Mammary epithelial cell (primary cell): ENCODE measurements at regions of chr3 and their contacts with region 1.

Region 1: DNA sequence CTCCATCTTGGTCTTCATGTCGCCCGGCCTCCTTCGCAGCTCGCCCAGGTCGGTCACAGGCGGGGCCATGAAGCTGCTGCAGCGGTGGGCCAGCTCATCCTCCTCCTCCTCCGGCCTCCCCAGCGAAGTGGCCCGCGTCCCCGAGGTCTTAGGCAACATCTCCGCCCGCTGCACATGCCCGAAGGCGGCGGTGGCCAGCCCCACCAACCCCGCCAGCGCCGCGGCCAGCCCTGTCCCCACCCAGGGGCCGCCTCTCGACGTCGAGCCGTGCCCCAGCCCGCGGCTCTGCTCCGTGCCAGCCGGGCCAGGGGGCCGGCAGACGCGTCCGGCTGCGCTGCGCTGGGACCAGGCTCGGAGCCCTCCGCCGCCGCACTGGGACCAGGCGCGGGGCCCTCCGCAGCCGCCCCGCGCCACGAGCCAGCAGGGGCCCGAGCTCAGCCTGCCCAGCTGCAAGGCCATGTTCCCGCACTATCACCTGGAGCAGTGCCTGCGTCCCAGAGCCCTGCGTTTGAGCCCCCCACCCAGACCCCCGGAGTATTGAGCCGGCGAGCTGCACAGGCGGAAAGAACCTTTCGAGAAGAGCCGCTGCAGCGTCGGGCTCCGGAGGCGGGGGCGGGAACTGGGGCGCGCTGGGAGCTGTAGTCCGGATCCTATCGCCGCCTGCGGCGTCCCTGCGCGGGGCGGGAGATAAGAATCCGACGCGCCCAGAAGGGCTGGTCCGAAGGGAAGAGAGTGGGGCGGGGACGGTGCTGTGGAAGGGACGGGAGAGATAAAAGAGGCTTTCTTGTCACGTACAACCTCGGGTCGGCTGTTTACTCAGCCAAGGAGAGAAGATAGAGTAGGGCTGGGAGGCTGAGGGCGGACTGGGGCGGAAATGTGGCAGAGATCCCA is at the start of gene CPOX:
- DNase-seq: peak; percentile 93
- H3K4me3 ChIP-seq: peak within 1 kb of the TSS; percentile 62 to 94 (median 92)
- H3K27ac ChIP-seq: peak within 1 kb of the TSS; percentile 58
- H3K4me1 ChIP-seq: peaks cover 7% of the 10 kb centered on the region
- H3K27me3 ChIP-seq: no peaks in the 10 kb centered on the region
- CTCF ChIP-seq: no peak
- total RNA-seq, gene CPOX: 24.3 to 25.2 TPM

Region 2: GRCh38 chr3:98039322-98040024 is 553.8 kb before region 1 on chr3:
- CTCF ChIA-PET with region 1: no interaction called
- dilution Hi-C with region 1: no loop called
- in situ Hi-C with region 1: loop called in 1 of 2 experiments (anchors 25 kb)
- intact Hi-C with region 1: loop called (anchors 5 kb)
- DNase-seq: peak; percentile 80
- H3K4me3 ChIP-seq: peak overlapping the region; percentile 47 to 52 (median 50)
- H3K27ac ChIP-seq: no peak overlapping the region
- H3K4me1 ChIP-seq: peaks cover 6% of the 10 kb centered on the region
- H3K27me3 ChIP-seq: no peaks in the 10 kb centered on the region
- CTCF ChIP-seq: peak; percentile 74 to 82

Region 3: DNA sequence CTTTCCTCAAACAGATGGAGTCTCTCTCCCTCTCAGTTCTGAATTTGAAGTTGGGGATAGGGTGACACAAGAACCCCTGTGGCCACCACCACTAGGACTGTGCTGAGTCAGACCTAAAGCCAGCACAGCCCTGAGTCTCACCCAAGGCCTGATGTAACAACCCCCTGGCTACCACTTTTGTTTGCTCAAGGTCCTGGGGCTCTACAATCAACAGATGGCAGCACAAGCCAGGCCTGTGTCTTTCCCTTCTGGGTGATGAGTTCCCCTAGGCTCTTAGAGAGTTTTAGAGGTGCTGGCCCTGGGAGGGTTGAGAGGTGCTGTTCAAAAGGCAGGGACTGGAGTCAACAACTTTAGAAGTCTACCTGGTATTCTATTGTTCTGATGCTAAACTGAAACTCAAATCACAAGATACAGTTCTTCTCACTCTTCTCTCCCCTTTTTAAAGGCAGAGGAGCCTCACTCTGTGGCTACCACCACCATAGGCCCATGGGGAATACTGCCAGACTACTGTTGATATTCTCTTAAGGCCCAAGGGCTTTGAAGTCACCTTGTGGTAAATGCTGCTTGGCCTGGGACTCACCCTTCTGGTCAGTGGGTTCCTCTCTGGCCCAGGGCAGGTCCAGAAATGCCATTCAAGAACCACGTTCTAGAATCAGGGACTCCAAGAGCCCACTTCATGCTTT is 233.2 kb before region 1 on chr3:
- CTCF ChIA-PET with region 1: no interaction called
- dilution Hi-C with region 1: no loop called
- in situ Hi-C with region 1: no loop called
- intact Hi-C with region 1: loop called (anchors 5 kb)
- DNase-seq: peak; percentile 65
- H3K4me3 ChIP-seq: no peak overlapping the region
- H3K27ac ChIP-seq: no peak overlapping the region
- H3K4me1 ChIP-seq: peaks cover 4% of the 10 kb centered on the region
- H3K27me3 ChIP-seq: no peaks in the 10 kb centered on the region
- CTCF ChIP-seq: peak; percentile 22 to 43

Region 4: DNA sequence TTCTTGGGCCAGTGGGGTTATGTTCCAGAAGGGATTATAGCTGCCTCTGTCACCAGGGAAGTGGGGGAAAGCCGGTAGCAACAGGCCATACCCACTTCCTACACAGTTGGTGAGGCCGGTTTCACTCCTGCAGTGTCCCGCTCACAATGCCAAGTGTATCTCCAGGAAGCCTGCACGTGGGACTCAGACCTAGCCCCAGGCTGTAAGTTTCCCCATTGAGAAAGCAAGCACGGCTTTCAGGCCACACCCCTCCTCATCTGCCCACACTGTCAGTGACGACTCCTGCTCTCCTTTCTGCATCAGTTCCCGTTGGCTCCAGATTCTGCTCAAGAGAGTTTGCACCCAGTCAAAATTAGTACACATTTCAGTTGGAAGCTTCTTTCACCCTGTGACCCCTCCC is 51.7 kb after region 1 on chr3:
- CTCF ChIA-PET with region 1: no interaction called
- dilution Hi-C with region 1: no loop called
- in situ Hi-C with region 1: no loop called
- intact Hi-C with region 1: no loop called
- DNase-seq: peak; percentile 67
- H3K4me3 ChIP-seq: no peak overlapping the region
- H3K27ac ChIP-seq: no peak overlapping the region
- H3K4me1 ChIP-seq: no peaks in the 10 kb centered on the region
- H3K27me3 ChIP-seq: peaks cover 3% of the 10 kb centered on the region
- CTCF ChIP-seq: no peak

Region 5: DNA sequence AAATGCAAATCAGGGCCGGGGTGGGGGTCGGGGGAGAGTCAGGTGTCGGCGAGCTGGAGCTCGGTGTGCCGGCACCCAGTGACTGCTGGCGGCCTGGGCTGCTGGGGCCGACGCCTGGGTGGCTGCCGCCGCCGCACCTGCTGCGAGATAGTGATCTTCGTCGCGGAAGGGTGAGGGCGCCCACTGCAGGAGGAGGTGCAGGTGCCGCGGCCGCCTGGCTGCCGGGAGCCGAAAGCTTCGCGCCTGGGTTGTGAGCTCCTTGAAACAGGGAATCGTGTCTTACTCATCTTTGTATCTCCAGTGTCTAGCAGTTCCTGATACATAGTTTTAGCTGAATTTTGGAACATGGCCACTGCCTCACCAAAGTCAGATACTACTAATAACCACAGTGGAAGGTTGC is 64.2 kb after region 1 on chr3:
- CTCF ChIA-PET with region 1: interaction called, 15 read pairs
- dilution Hi-C with region 1: no loop called
- in situ Hi-C with region 1: no loop called
- intact Hi-C with region 1: no loop called
- DNase-seq: peak; percentile 24
- H3K4me3 ChIP-seq: peak overlapping the region in 1 of 3 experiments; percentile 4
- H3K27ac ChIP-seq: no peak overlapping the region
- H3K4me1 ChIP-seq: peaks cover 6% of the 10 kb centered on the region
- H3K27me3 ChIP-seq: no peaks in the 10 kb centered on the region
- CTCF ChIP-seq: peak; percentile 25 to 61

Region 6: GRCh38 chr3:98817547-98818041 is 224.3 kb after region 1 on chr3:
- CTCF ChIA-PET with region 1: no interaction called
- dilution Hi-C with region 1: no loop called
- in situ Hi-C with region 1: loop called in 1 of 2 experiments (anchors 5 kb)
- intact Hi-C with region 1: no loop called
- DNase-seq: no peak
- H3K4me3 ChIP-seq: no peak overlapping the region
- H3K27ac ChIP-seq: no peak overlapping the region
- H3K4me1 ChIP-seq: peaks cover 3% of the 10 kb centered on the region
- H3K27me3 ChIP-seq: no peaks in the 10 kb centered on the region
- CTCF ChIP-seq: peak; percentile 57 to 69

Region 7: DNA sequence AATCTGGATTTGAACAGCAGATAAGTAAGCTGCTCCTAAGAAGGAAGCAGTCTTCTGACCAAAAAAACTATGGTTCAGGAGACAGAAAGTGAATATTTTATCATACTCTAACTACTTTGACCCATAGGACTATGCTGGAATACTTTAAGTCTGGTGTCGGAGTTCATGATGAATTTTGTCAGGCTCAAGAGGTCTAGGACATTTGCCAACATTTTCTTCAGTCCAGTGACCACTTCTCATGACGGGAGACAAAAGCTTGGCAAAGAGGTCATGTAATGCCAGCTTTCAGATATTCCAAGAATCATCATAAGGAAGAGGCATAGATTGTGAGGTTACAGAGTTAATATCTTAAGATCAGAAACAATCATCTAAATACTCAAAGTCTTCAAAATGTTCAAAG is 328.7 kb after region 1 on chr3:
- CTCF ChIA-PET with region 1: no interaction called
- dilution Hi-C with region 1: no loop called
- in situ Hi-C with region 1: no loop called
- intact Hi-C with region 1: no loop called
- DNase-seq: no peak
- H3K4me3 ChIP-seq: no peak overlapping the region
- H3K27ac ChIP-seq: no peak overlapping the region
- H3K4me1 ChIP-seq: peaks cover 34% of the 10 kb centered on the region
- H3K27me3 ChIP-seq: no peaks in the 10 kb centered on the region
- CTCF ChIP-seq: no peak